Caco-2 (cell line): ENCODE measurements at regions of chr11 and their contacts with region 1.

Region 1: GRCh38 chr11:103055221-103055890 is 36.6 kb downstream of the DCUN1D5 start:
- DNase-seq: peak in 1 of 2 experiments; percentile 44
- H3K4me3 ChIP-seq: no peak overlapping the region
- H3K4me3 Mint-ChIP-seq: no peak overlapping the region
- H3K27ac Mint-ChIP-seq: no peak overlapping the region
- H3K4me1 ChIP-seq: no peaks in the 10 kb centered on the region
- H3K4me1 Mint-ChIP-seq: no peaks in the 10 kb centered on the region
- H3K27me3 ChIP-seq: no peaks in the 10 kb centered on the region
- H3K27me3 Mint-ChIP-seq: no peaks in the 10 kb centered on the region
- CTCF ChIP-seq: peak; percentile 80

Region 2: GRCh38 chr11:102683277-102683676 is 372.1 kb before region 1 on chr11:
- CTCF ChIA-PET with region 1: no interaction called
- POLR2A ChIA-PET with region 1: no interaction called
- intact Hi-C with region 1: loop called (anchors 1 kb)
- DNase-seq: peak; percentile 47 to 63
- H3K4me3 ChIP-seq: no peak overlapping the region
- H3K4me3 Mint-ChIP-seq: no peak overlapping the region
- H3K27ac Mint-ChIP-seq: no peak overlapping the region
- H3K4me1 ChIP-seq: no peaks in the 10 kb centered on the region
- H3K4me1 Mint-ChIP-seq: no peaks in the 10 kb centered on the region
- H3K27me3 ChIP-seq: peaks cover 2% of the 10 kb centered on the region
- H3K27me3 Mint-ChIP-seq: peaks cover 10% of the 10 kb centered on the region
- CTCF ChIP-seq: peak; percentile 40 to 53

Region 3: GRCh38 chr11:102810945-102811660 is 244.3 kb before region 1 on chr11:
- CTCF ChIA-PET with region 1: no interaction called
- POLR2A ChIA-PET with region 1: no interaction called
- intact Hi-C with region 1: loop called (anchors 2 kb)
- DNase-seq: peak in 1 of 2 experiments; percentile 49
- H3K4me3 ChIP-seq: no peak overlapping the region
- H3K4me3 Mint-ChIP-seq: no peak overlapping the region
- H3K27ac Mint-ChIP-seq: no peak overlapping the region
- H3K4me1 ChIP-seq: no peaks in the 10 kb centered on the region
- H3K4me1 Mint-ChIP-seq: no peaks in the 10 kb centered on the region
- H3K27me3 ChIP-seq: no peaks in the 10 kb centered on the region
- H3K27me3 Mint-ChIP-seq: no peaks in the 10 kb centered on the region
- CTCF ChIP-seq: peak; percentile 71 to 78

Region 4: DNA sequence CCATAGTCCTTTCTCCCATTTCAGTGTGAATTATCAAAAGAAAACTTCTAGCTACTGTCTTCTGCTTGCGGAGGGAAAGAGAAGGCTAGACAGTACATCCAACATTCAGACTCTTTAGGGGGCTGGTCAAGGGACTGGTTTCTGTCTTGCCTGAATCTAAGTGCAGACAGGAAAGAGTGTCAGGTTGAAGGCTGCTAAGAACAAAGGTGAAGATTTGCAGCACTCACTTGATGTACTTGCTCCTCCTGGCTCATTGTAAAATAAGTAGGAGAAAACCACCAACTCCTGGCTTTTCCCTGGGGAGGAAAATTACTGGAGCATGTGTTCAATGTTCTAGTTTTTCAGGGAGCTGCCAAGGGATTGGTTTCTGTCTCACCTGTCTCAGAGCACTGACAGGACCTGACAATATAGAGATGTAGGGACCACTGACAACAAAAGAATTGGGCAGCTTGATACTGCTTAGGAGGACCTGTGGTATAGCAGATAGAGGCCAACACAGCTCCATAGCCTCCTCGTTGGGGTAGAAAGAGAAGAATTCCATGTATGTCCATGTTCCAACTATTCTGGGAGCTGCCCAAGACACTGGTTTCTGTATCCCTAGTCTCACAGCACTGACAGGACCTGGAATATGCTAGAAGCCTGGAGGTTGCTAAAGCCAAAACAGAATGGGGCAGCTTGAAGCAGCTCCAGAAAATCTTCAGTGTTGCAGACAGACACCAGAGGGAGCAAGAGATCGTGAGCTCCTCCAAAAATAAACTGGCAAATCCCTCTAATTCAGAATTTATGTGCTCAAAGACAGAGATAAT is 140.9 kb before region 1 on chr11:
- CTCF ChIA-PET with region 1: no interaction called
- POLR2A ChIA-PET with region 1: no interaction called
- intact Hi-C with region 1: loop called (anchors 1 kb)
- DNase-seq: peak in 1 of 2 experiments; percentile 58
- H3K4me3 ChIP-seq: no peak overlapping the region
- H3K4me3 Mint-ChIP-seq: no peak overlapping the region
- H3K27ac Mint-ChIP-seq: no peak overlapping the region
- H3K4me1 ChIP-seq: no peaks in the 10 kb centered on the region
- H3K4me1 Mint-ChIP-seq: no peaks in the 10 kb centered on the region
- H3K27me3 ChIP-seq: no peaks in the 10 kb centered on the region
- H3K27me3 Mint-ChIP-seq: no peaks in the 10 kb centered on the region
- CTCF ChIP-seq: peak; percentile 79 to 88

Region 5: DNA sequence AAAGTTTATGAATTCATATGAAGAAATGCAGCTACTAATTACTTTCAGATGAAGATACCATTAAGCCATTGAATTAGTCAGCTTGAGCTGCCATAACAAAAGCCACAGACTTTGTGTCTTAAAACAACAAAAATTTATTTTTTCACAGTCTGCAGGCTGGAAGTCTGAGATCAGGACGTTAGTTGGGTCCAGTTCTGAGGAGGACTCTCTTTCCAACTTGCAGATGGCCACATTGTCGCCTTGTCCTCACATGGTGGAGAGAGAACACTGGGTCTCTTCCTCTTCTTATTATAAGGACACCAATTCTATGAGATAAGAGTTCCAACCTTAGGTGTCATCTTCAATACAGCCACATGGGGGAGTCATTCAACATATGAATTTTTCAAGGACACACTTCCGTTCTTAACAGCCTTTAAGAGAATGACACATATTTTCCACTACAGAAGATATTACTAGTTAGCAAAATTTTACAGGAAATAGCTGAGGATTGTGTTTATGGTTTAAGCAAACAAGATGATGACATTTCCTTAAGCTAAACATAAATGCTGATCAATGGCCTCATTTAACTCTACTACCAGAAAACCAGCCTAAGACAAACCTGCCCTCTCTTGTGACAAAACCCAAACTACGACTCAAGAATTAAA is 19.4 kb before region 1 on chr11:
- CTCF ChIA-PET with region 1: no interaction called
- POLR2A ChIA-PET with region 1: no interaction called
- intact Hi-C with region 1: loop called (anchors 1 kb)
- DNase-seq: peak; percentile 52 to 75
- H3K4me3 ChIP-seq: no peak overlapping the region
- H3K4me3 Mint-ChIP-seq: no peak overlapping the region
- H3K27ac Mint-ChIP-seq: no peak overlapping the region
- H3K4me1 ChIP-seq: no peaks in the 10 kb centered on the region
- H3K4me1 Mint-ChIP-seq: no peaks in the 10 kb centered on the region
- H3K27me3 ChIP-seq: no peaks in the 10 kb centered on the region
- H3K27me3 Mint-ChIP-seq: peaks cover 3% of the 10 kb centered on the region
- CTCF ChIP-seq: peak; percentile 78 to 85